Dorsolateral prefrontal cortex (tissue), 120 donors: ENCODE measurements at regions of chr1 and their contacts with region 1.

Region 1: GRCh38 chr1:170765712-170766330 is 101.9 kb downstream of the PRRX1 start:
- DNase-seq: no peak
- H3K4me3 ChIP-seq: no peak overlapping the region
- H3K27ac ChIP-seq: no peak overlapping the region
- H3K27me3 ChIP-seq: no peaks in the 10 kb centered on the region
- CTCF ChIP-seq: peak; percentile 41 to 82 (median 66)

Region 2: DNA sequence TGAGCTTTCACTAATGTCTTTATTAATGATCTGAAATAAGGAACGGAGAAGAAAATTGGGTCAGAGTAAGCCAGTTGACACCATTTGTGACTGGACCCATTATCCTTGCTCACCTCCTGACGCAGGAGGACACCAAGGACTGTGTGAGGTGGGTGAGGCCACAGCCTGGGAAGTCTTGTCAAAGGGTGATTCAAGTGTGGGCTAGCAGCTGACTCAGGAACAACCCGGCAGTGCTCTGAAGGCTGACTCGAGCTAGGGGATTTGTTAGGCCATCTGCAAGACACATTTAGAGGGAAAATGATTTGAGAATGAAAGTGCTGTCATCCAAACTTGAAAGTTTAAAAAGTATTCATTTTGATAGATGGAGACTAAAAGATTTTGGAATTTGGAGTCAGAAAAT is 80.7 kb before region 1 on chr1:
- intact Hi-C with region 1: loop called in 1 of 2 experiments (anchors 5 kb)
- DNase-seq: no peak
- H3K4me3 ChIP-seq: no peak overlapping the region
- H3K27ac ChIP-seq: no peak overlapping the region
- H3K27me3 ChIP-seq: peaks cover 0 to 6% (median 0%) of the 10 kb centered on the region in 45 donors
- CTCF ChIP-seq: no peak

Region 3: DNA sequence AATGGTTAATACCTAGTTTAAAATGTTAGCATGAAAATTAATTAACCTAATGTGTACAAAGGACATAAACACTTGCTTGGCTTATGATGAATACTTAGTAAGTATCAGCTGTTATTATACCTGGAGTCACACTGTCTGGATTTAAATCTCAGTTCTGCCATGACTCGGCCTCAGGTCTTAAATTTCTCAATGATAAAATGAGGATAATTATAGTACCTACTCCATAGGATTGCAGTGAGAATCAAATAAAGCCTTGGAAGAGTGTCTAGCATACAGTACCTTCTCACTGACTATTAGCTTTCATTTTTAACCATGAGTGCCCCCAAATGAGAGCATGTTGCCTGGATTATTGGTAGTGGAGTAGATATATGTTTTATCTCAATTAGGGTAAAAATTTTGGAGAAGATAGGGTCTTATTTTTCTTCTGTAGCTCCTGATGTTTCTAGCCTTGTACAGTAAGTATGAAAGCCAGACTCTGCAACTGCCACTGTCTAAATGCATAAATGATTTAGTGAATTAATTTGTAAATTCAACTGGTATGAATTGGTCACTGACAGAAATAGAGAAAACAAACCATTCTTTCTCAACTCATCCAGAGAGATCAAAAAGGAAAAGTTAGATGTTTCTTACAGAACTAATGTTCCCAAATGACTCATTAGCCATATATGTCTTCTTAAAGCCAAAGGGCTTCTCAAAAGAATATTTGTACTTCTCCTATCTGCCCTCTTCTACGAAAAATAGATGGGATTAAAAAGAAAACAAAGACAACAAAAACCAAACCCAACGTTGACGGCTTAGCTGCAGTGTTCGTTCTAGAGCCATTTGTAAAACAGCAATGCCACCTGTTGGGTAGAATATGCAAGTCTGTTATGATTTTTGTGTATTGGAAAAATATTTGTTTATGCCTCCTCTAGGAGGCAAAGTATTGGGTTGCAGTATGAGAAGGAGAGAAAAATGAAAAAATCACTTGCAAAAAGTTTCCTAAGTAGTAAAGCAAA is 115.7 kb after region 1 on chr1:
- intact Hi-C with region 1: loop called in 1 of 2 experiments (anchors 10 kb)
- DNase-seq: no peak
- H3K4me3 ChIP-seq: peak overlapping the region in 35 of 59 donors; percentile 8 to 50 (median 28)
- H3K27ac ChIP-seq: peak overlapping the region in 12 of 59 donors; percentile 16 to 79 (median 54)
- H3K27me3 ChIP-seq: no peaks in the 10 kb centered on the region
- CTCF ChIP-seq: peak in 55 of 56 donors; percentile 40 to 93 (median 68)